ENCODE measurements at regions of chr11 and their contacts with region 1.

Region 1: DNA sequence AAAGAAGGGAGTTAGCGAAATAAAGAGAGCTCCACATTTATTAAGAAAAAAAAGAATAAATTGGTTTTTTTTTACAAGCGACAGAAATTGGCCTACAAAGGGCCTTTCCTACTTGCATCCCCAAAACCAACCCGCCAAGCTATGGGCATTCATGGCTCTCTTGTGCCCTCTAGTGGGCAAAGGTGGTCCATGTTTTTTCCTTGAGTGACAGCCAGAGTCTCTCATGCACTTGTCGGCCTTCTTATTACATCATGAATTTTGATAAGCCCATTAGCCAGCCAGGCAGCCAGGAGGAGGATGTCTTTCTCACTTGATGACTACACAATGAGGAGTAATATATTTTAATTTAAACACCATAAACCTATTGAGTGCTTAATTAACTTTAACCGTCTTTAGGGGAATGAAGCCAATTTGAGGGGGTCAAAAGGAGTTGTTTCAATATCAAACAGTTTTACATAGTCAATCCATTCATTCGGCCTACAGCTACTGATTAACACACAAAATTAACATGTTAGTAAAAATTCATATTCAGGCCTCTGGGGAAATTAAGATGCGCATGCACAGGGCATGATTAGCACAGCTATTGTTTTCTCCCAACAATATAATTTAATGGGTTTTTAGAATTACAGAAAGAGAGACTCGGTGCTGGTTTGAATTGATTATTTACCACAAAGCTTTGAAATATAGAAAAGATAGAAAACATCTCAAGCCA is 85.5 kb downstream of the RCN1 start:
- DNase-seq: peak; percentile 81 to 88
- H3K4me3 ChIP-seq: no peak overlapping the region
- H3K4me3 Mint-ChIP-seq: no peak overlapping the region
- H3K27ac Mint-ChIP-seq: no peak overlapping the region
- H3K4me1 ChIP-seq: no peaks in the 10 kb centered on the region
- H3K4me1 Mint-ChIP-seq: no peaks in the 10 kb centered on the region
- H3K27me3 ChIP-seq: no peaks in the 10 kb centered on the region
- H3K27me3 Mint-ChIP-seq: peaks cover 20% of the 10 kb centered on the region
- CTCF ChIP-seq: peak; percentile 87

Region 2: DNA sequence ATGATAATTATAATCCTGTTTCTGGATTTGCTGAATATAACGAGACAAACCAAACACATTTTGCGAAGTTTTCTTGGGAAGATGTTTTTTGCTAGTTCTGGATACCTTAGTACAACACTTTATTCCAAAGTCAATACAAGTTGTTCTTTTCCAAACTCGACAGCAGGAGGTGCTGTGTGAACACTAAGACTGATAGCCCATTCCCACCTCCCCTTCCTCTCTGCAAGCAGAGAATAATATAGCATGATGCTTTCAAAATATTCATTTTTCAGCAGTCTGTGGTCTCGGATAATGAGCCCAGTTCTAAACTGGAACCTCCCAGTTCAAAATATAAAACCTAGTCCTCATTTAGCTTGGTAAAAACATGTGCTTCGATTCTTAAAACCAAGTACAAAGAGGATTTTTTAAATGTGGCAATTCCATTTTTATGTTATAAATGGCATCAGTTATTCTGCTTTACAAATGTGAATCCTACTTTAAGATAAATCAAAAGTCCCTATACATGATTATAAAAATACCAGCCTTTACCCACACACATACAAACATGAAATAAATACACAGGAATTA is 936.0 kb before region 1 on chr11:
- CTCF ChIA-PET with region 1: no interaction called
- POLR2A ChIA-PET with region 1: no interaction called
- intact Hi-C with region 1: loop called (anchors 1 kb)
- DNase-seq: peak; percentile 42 to 51
- H3K4me3 ChIP-seq: no peak overlapping the region
- H3K4me3 Mint-ChIP-seq: no peak overlapping the region
- H3K27ac Mint-ChIP-seq: no peak overlapping the region
- H3K4me1 ChIP-seq: no peaks in the 10 kb centered on the region
- H3K4me1 Mint-ChIP-seq: no peaks in the 10 kb centered on the region
- H3K27me3 ChIP-seq: no peaks in the 10 kb centered on the region
- H3K27me3 Mint-ChIP-seq: peaks cover 3% of the 10 kb centered on the region
- CTCF ChIP-seq: peak; percentile 70 to 71

Region 3: GRCh38 chr11:31641477-31642062 is 534.8 kb before region 1 on chr11:
- CTCF ChIA-PET with region 1: no interaction called
- POLR2A ChIA-PET with region 1: no interaction called
- intact Hi-C with region 1: loop called (anchors 2 kb)
- DNase-seq: peak; percentile 51
- H3K4me3 ChIP-seq: no peak overlapping the region
- H3K4me3 Mint-ChIP-seq: no peak overlapping the region
- H3K27ac Mint-ChIP-seq: no peak overlapping the region
- H3K4me1 ChIP-seq: no peaks in the 10 kb centered on the region
- H3K4me1 Mint-ChIP-seq: no peaks in the 10 kb centered on the region
- H3K27me3 ChIP-seq: no peaks in the 10 kb centered on the region
- H3K27me3 Mint-ChIP-seq: no peaks in the 10 kb centered on the region
- CTCF ChIP-seq: peak; percentile 60 to 66

Region 4: DNA sequence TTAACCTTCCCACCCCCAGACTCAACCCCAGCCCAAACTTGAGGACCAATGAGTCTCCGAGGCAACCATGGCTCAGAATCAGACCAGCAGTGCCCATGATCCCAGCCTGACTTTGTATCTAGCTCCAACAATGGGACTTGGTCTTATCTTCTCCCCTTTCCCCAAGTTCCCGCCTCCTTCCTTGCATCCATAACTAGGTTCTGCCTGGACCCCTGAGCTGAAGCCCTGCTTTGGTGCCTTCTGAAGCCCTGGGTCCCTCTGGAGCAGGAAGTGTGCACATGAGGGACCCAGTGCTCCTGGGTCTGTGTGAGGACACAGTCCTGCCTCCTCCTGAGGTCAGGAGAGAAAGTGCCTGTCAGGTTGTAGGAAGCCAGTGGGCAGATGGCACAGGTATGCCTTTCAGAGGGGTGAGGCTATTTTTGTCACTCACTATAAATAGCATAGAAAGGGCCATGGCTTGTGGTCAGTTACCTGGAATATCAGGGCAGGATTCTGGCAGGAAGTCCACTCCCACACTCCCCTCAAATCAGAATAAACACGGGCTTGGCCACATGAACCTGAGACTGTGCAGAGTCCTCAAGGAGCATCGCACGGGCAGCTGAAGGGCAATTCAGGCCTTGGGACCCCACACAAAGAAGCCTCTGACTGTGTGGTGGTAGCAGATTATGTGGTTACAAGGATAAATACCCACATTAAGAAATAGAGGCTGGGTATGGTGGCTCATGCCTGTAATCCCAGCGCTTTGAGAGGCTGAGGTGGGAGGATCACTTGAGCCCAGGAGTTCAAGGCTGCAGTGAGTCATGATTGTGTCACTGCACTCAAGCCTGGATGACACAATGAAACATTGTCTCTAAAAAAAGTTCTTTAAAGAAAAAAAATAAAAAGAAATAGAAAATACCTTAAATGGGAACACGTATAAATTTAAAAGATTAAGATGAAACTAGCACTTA is 58.1 kb before region 1 on chr11:
- CTCF ChIA-PET with region 1: no interaction called
- POLR2A ChIA-PET with region 1: no interaction called
- intact Hi-C with region 1: loop called (anchors 1 kb)
- DNase-seq: no peak
- H3K4me3 ChIP-seq: no peak overlapping the region
- H3K4me3 Mint-ChIP-seq: no peak overlapping the region
- H3K27ac Mint-ChIP-seq: no peak overlapping the region
- H3K4me1 ChIP-seq: no peaks in the 10 kb centered on the region
- H3K4me1 Mint-ChIP-seq: no peaks in the 10 kb centered on the region
- H3K27me3 ChIP-seq: no peaks in the 10 kb centered on the region
- H3K27me3 Mint-ChIP-seq: peaks cover 25% of the 10 kb centered on the region
- CTCF ChIP-seq: no peak

Region 5: DNA sequence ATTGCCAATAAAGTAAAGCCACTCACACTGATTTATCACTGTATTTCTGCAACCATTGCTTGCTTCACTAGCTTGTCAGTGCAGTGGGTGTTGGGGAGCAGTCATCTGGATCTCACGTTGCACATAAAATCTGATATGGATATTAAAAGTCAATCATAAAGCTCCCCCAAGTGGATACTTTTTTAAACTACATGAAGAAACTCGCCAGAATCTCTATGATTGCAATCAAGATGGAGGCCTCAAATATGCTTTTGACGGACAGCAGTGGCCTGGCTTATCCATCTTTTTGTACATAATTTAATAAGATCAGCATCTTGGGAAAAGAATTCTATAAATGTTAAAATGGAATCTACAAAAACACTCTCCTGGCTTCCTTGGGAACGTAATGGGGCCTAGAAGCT is 121.2 kb after region 1 on chr11:
- CTCF ChIA-PET with region 1: no interaction called
- POLR2A ChIA-PET with region 1: no interaction called
- intact Hi-C with region 1: loop called (anchors 5 kb)
- DNase-seq: no peak
- H3K4me3 ChIP-seq: no peak overlapping the region
- H3K4me3 Mint-ChIP-seq: no peak overlapping the region
- H3K27ac Mint-ChIP-seq: no peak overlapping the region
- H3K4me1 ChIP-seq: no peaks in the 10 kb centered on the region
- H3K4me1 Mint-ChIP-seq: no peaks in the 10 kb centered on the region
- H3K27me3 ChIP-seq: no peaks in the 10 kb centered on the region
- H3K27me3 Mint-ChIP-seq: peaks cover 6% of the 10 kb centered on the region
- CTCF ChIP-seq: peak in 1 of 2 experiments; percentile 1

Region 6: GRCh38 chr11:32420937-32421901 is 244.8 kb after region 1 on chr11:
- CTCF ChIA-PET with region 1: no interaction called
- POLR2A ChIA-PET with region 1: no interaction called
- intact Hi-C with region 1: no loop called
- DNase-seq: no peak
- H3K4me3 ChIP-seq: no peak overlapping the region
- H3K4me3 Mint-ChIP-seq: no peak overlapping the region
- H3K27ac Mint-ChIP-seq: no peak overlapping the region
- H3K4me1 ChIP-seq: no peaks in the 10 kb centered on the region
- H3K4me1 Mint-ChIP-seq: no peaks in the 10 kb centered on the region
- H3K27me3 ChIP-seq: no peaks in the 10 kb centered on the region
- H3K27me3 Mint-ChIP-seq: no peaks in the 10 kb centered on the region
- CTCF ChIP-seq: no peak